HAP-1 (cell line): ENCODE measurements at regions of chr7 and their contacts with region 1.

Region 1: DNA sequence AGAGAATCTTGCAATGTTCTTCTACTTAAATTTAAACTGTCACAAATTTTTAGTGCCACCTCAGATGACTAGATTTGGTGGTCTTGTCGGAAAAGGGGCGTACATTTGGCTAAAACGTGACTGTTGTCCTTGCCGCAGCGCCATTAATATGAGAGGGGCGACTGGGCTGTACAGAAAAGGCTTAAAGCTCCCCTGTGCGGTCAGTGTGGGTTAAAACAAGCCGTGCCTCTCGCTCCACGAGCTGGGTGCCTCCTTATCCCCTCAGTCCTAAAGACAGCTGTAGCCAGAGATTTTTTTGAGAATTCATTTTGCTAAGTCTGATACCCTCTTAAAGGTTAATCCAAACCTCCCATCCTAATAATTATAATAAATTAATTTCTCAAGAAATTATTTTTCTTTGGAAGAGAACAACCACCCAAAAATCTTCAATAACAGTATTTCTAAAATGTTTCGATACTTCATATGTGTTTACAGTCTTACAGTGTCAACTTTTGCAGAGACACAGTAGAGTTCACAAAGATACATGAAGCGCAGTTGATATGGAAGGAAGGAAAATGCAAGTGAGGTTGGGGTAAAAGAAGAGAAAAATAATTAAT is 68.6 kb downstream of the C7orf25 start:
- DNase-seq: peak; percentile 53 to 76
- H3K4me3 ChIP-seq: no peak overlapping the region
- H3K4me1 ChIP-seq: no peaks in the 10 kb centered on the region
- H3K27me3 ChIP-seq: no peaks in the 10 kb centered on the region

Region 2: DNA sequence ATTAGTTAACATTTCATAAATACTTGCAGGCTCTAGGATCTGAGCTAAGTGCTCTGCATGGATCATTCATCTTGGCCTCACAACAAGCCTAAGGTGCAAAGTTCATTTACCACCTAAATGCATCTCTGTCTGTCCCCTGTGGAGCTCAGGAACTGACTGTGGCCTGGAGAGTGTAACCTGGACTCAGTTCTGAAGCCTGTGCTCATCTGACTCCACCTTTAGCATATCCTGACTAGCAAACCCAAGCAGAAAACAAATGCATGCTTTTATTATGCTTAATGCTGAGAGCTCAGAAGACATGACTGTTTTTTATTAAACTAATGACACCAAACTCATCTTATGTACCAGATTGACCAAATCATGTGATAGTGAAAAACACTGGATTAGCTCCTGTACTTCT is 894.8 kb before region 1 on chr7:
- in situ Hi-C with region 1: loop called (anchors 5 kb)
- DNase-seq: no peak
- H3K4me3 ChIP-seq: no peak overlapping the region
- H3K4me1 ChIP-seq: no peaks in the 10 kb centered on the region; the same call in 1 of the 2 replicates
- H3K27me3 ChIP-seq: no peaks in the 10 kb centered on the region

Region 3: GRCh38 chr7:42174391-42174912 is 668.9 kb before region 1 on chr7:
- in situ Hi-C with region 1: no loop called
- DNase-seq: no peak
- H3K4me3 ChIP-seq: no peak overlapping the region
- H3K4me1 ChIP-seq: no peaks in the 10 kb centered on the region
- H3K27me3 ChIP-seq: no peaks in the 10 kb centered on the region

Region 4: DNA sequence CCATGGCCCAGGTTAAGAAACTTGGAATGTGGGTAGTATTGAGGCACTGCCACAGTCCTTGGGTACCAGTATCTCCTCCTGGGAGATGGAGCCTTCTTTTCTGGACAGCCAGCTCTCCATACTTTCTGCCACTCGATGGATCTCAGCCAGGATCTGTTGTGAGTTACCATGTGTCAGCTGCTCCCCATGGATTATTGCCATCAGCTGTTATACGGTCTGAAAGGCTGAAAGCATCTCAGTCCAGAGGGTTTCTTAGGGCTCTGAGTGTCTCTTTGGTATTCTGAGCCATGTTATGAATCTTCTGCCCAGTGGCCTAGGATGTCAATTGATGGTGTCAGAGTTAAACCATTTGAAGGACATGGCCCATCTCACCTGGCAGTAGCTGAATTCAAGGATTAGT is 128.9 kb before region 1 on chr7:
- in situ Hi-C with region 1: no loop called
- DNase-seq: no peak
- H3K4me3 ChIP-seq: no peak overlapping the region
- H3K4me1 ChIP-seq: no peaks in the 10 kb centered on the region
- H3K27me3 ChIP-seq: no peaks in the 10 kb centered on the region; the same call in 1 of the 2 replicates

Region 5: DNA sequence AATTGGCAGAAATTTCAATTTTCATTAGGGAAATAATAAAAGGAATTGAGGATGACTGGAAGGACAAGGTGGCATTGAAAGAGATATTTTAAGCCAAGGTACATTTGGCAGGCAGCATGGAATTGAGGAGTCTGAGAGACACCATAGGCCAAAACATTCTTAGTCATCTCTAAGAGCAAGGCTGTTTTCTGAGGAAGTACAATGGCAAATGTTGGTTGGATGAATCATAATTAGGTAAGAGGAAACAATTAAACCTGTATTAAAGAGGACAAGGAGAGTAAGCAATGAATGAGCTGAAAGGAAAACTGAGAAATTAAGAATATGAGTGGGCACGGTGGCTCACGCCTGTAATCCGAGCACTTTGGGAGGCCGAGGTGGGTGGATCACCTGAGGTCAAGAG is 175.1 kb after region 1 on chr7:
- in situ Hi-C with region 1: no loop called
- DNase-seq: no peak
- H3K4me3 ChIP-seq: no peak overlapping the region
- H3K4me1 ChIP-seq: no peaks in the 10 kb centered on the region
- H3K27me3 ChIP-seq: no peaks in the 10 kb centered on the region